CD4-positive, alpha-beta T cell (primary cell): ENCODE measurements at regions of chr16 and their contacts with region 1.

Region 1: DNA sequence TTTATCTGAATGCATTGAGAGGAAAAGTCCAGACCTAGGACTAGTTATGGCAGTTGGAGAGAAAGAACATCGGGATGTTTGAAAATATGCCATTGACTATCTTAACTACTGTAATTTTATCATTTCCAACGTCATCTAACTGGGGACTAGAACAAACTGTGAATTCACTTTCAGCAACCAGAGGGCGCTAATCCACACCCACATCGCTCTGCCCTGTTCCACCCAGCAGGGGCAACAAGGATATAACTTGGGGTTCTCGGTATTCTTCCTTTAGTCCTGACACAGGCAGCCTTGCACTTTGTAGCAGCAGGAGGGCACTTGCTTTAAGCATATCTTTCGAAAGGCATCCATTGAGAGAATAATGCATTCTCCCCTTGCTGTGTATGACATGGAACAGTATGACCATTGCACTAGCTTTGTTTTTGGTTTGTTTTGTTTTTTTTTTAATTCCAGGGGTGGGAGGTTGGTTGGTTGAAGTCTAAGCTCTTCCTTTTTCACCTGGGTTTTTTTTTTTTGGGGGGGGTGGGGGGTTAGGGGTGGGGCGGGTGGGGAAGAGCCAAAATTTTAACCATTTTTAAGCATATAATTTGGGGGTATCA is 31.5 kb downstream of the SIAH1 start:
- DNase-seq: peak; percentile 47 to 90 (median 59)
- ATAC-seq: peak; percentile 98
- H3K4me3 ChIP-seq: no peak overlapping the region
- H3K4me3 Mint-ChIP-seq: no peak overlapping the region
- H3K27ac ChIP-seq: no peak overlapping the region
- H3K27ac Mint-ChIP-seq: peak overlapping the region; percentile 67
- H3K4me1 ChIP-seq: peaks cover 2% of the 10 kb centered on the region
- H3K4me1 Mint-ChIP-seq: peaks cover 12% of the 10 kb centered on the region
- H3K27me3 ChIP-seq: no peaks in the 10 kb centered on the region
- H3K27me3 Mint-ChIP-seq: no peaks in the 10 kb centered on the region
- CTCF ChIP-seq: peak; percentile 85

Region 2: GRCh38 chr16:48542020-48542473 is 188.4 kb after region 1 on chr16:
- CTCF ChIA-PET with region 1: no interaction called
- POLR2A ChIA-PET with region 1: no interaction called
- intact Hi-C with region 1: loop called (anchors 1 to 5 kb)
- DNase-seq: peak in 3 of 14 experiments; percentile 35 to 54 (median 44)
- ATAC-seq: peak; percentile 54
- H3K4me3 ChIP-seq: no peak overlapping the region
- H3K4me3 Mint-ChIP-seq: no peak overlapping the region
- H3K27ac ChIP-seq: no peak overlapping the region
- H3K27ac Mint-ChIP-seq: peak overlapping the region; percentile 24
- H3K4me1 ChIP-seq: peaks cover 4% of the 10 kb centered on the region
- H3K4me1 Mint-ChIP-seq: peaks cover 7% of the 10 kb centered on the region
- H3K27me3 ChIP-seq: no peaks in the 10 kb centered on the region
- H3K27me3 Mint-ChIP-seq: no peaks in the 10 kb centered on the region
- CTCF ChIP-seq: no peak